ENCODE measurements at regions of chr6 and their contacts with region 1.

Region 1: GRCh38 chr6:11064836-11065235 is 20.7 kb upstream of the ELOVL2 start:
- DNase-seq: no peak
- ATAC-seq: no peak
- H3K4me3 ChIP-seq: no peak overlapping the region
- H3K27ac ChIP-seq: no peak overlapping the region
- H3K4me1 ChIP-seq: peaks cover 0 to 10% (median 10%) of the 10 kb centered on the region in 3 donors
- H3K27me3 ChIP-seq: peaks cover 0 to 5% (median 0%) of the 10 kb centered on the region in 4 donors
- CTCF ChIP-seq: no peak

Region 2: GRCh38 chr6:10831609-10832008 is 233.2 kb before region 1 on chr6:
- intact Hi-C with region 1: no loop called
- DNase-seq: no peak
- ATAC-seq: no peak
- H3K4me3 ChIP-seq: no peak overlapping the region
- H3K27ac ChIP-seq: no peak overlapping the region
- H3K4me1 ChIP-seq: no peaks in the 10 kb centered on the region
- H3K27me3 ChIP-seq: no peaks in the 10 kb centered on the region
- CTCF ChIP-seq: no peak

Region 3: GRCh38 chr6:10954590-10955010 is 110.2 kb before region 1 on chr6:
- intact Hi-C with region 1: loop called in 2 of 3 experiments (anchors 5 kb)
- DNase-seq: peak; percentile 47 to 91 (median 76)
- ATAC-seq: peak; percentile 82 to 97 (median 92)
- H3K4me3 ChIP-seq: no peak overlapping the region
- H3K27ac ChIP-seq: no peak overlapping the region
- H3K4me1 ChIP-seq: no peaks in the 10 kb centered on the region
- H3K27me3 ChIP-seq: no peaks in the 10 kb centered on the region
- CTCF ChIP-seq: peak; percentile 62 to 70 (median 70)

Region 4: DNA sequence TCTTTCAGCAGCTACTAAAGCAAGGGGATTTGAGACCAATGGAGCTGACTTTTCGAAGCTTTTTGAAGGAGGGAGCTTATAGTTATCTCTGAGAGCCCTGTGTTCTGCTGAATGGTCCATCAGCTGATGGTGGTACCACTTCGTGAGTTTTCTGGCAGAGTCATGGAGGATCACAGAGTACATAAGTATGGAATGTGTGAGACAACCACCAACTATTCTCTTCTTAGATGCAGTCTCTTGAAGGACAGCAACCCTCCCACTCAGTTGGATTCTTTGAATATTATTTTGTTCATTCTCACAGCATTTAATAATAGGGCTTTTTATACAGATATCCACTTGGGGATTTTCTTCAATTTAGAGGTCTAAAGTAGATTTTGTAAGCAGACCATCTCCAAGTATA is 96.1 kb before region 1 on chr6:
- intact Hi-C with region 1: no loop called
- DNase-seq: no peak
- ATAC-seq: no peak
- H3K4me3 ChIP-seq: no peak overlapping the region
- H3K27ac ChIP-seq: no peak overlapping the region
- H3K4me1 ChIP-seq: no peaks in the 10 kb centered on the region
- H3K27me3 ChIP-seq: no peaks in the 10 kb centered on the region
- CTCF ChIP-seq: no peak

Region 5: GRCh38 chr6:11144393-11144851 is 79.6 kb after region 1 on chr6:
- intact Hi-C with region 1: no loop called
- DNase-seq: peak; percentile 53 to 85 (median 71)
- ATAC-seq: peak; percentile 87 to 97 (median 96)
- H3K4me3 ChIP-seq: no peak overlapping the region
- H3K27ac ChIP-seq: no peak overlapping the region
- H3K4me1 ChIP-seq: no peaks in the 10 kb centered on the region
- H3K27me3 ChIP-seq: no peaks in the 10 kb centered on the region
- CTCF ChIP-seq: peak; percentile 55 to 81 (median 68)

Measured in pancreas (tissue), 10 donors.